Breast epithelium (tissue), 4 donors: ENCODE measurements at regions of chr2 and their contacts with region 1.

Region 1: GRCh38 chr2:141109633-141110032 is 1021.2 kb downstream of the LRP1B start:
- DNase-seq: no peak
- H3K4me3 ChIP-seq: no peak overlapping the region
- H3K27ac ChIP-seq: no peak overlapping the region
- H3K4me1 ChIP-seq: no peaks in the 10 kb centered on the region
- H3K27me3 ChIP-seq: no peaks in the 10 kb centered on the region
- CTCF ChIP-seq: no peak
- POLR2A ChIP-seq: no peak

Region 2: DNA sequence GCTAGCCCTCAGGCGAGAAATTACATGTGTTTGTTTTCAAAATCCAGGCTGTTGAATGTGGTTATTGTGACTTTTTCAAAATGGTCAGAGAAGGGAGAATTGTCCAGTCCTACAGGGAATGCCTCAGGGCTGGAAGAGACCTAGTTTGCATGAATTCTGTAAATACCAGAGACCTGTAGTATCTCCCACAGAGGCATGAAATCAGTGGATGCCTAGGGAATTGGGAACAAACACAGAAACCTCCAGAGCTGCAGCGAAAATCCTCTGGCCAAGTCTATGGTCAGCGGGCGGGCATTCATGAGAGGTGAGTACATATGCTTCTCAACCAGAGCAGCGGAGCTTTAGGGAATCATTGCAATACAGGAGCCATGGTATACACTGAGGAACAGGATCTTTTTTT is 732.9 kb before region 1 on chr2:
- intact Hi-C with region 1: no loop called
- DNase-seq: no peak
- H3K4me3 ChIP-seq: no peak overlapping the region
- H3K27ac ChIP-seq: no peak overlapping the region
- H3K4me1 ChIP-seq: no peaks in the 10 kb centered on the region
- H3K27me3 ChIP-seq: no peaks in the 10 kb centered on the region
- CTCF ChIP-seq: no peak
- POLR2A ChIP-seq: no peak

Region 3: GRCh38 chr2:141075753-141076152 is 33.9 kb before region 1 on chr2:
- intact Hi-C with region 1: no loop called
- DNase-seq: no peak
- H3K4me3 ChIP-seq: no peak overlapping the region
- H3K27ac ChIP-seq: no peak overlapping the region
- H3K4me1 ChIP-seq: no peaks in the 10 kb centered on the region
- H3K27me3 ChIP-seq: no peaks in the 10 kb centered on the region
- CTCF ChIP-seq: no peak
- POLR2A ChIP-seq: no peak

Region 4: GRCh38 chr2:141125432-141125831 is 15.8 kb after region 1 on chr2:
- intact Hi-C with region 1: loop called (anchors 2 kb)
- DNase-seq: no peak
- H3K4me3 ChIP-seq: no peak overlapping the region
- H3K27ac ChIP-seq: no peak overlapping the region
- H3K4me1 ChIP-seq: no peaks in the 10 kb centered on the region
- H3K27me3 ChIP-seq: no peaks in the 10 kb centered on the region
- CTCF ChIP-seq: no peak
- POLR2A ChIP-seq: no peak